ENCODE measurements at regions of chr6 and their contacts with region 1.

Region 1: DNA sequence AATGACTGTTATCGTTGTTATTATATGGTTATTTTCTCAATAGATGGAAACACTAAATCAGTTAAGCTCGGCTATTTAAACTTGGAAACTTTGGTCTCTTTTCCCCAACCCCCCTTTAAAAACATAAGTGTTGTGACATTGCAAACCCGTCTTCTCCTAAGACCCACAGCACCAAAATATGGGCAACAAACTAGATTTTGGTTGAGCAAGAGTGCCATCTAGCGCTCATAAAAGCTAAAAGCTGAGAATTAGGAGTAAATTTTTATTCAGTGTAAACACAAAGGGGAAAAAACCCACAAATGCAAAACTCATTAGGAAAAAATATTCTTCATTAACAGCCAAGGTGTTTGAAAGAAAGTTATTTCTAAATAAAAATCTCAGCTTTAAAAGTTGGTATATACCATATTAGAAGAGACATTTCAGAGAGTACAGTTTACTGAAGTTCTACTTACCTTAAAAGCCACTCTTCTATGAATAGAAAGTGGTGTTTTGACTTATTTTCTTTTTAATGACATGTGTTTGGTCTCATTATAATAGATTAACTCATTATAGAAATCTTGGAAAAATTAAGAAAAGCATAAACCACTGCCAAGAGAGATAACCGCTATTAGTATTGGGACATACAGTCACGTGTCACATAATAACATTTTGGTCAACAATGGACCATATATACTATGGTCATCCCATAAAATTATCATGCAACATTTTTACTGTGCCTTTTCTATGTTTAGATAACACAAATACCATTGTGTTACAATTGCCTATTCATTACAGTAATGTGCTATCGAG is 21.1 kb downstream of the SESN1 start:
- DNase-seq: peak; percentile 30 to 68
- H3K4me3 ChIP-seq: no peak overlapping the region
- H3K27ac ChIP-seq: no peak overlapping the region
- H3K4me1 ChIP-seq: no peaks in the 10 kb centered on the region; the same call in 1 of the 2 replicates
- H3K27me3 ChIP-seq: no peaks in the 10 kb centered on the region
- CTCF ChIP-seq: peak; percentile 87

Region 2: DNA sequence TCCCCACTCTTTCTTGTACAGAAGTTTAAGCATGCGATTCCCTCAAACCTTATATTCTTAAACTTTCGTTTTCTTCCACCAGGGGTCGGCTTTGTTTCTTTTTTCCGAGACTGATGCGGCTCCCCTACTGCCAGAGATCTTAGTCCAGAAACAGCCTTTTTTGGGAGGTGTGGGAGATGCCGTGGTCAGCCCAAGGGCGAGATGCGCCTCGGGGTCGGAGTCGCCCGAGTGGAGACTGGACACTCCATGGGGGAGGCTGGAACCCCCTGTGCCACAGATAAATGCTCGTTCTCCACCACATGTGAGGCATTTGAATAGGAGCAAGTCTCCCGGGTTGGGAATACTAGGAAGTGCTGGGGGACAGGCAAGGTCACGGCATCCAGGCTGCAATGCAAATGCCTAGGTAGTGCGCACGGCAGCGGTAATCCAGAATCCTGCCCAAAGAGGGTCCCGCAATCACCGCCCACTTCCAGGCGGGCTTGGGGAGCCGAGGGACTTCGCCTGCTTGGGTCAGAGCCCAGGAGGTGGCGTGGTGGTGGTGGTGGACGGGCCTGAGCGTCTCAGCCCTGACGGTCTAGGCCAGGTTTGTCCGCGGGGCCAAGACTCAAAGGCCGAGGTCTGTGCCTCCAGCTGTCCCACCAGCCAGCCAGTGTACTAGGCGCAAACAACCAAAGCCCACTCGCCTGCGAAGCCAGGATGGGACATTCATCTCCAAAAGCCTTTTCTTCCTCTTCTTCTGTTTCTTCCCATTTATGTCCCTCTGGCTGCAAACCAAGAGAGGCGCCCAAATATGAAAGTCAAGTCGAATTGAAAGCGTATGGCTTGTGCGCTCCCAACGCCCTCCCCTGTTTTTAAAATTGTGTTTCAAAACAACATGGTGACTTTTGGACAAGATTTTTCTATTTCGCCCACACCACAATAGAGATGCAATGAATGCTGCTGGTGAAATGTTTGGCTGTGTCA is 959.7 kb before region 1 on chr6:
- CTCF ChIA-PET with region 1: no interaction called
- POLR2A ChIA-PET with region 1: no interaction called
- intact Hi-C with region 1: loop called (anchors 10 kb)
- DNase-seq: peak; percentile 23 to 59
- H3K4me3 ChIP-seq: 0 out of 2 replicates have a peak overlapping the region, but pooled peaks have one; percentile 8
- H3K27ac ChIP-seq: no peak overlapping the region
- H3K4me1 ChIP-seq: no peaks in the 10 kb centered on the region
- H3K27me3 ChIP-seq: peaks cover 5% of the 10 kb centered on the region; the same call in 1 of the 2 replicates
- CTCF ChIP-seq: peak; percentile 87

Region 3: GRCh38 chr6:108782179-108783041 is 291.1 kb before region 1 on chr6:
- CTCF ChIA-PET with region 1: no interaction called
- POLR2A ChIA-PET with region 1: no interaction called
- intact Hi-C with region 1: loop called (anchors 2 kb)
- DNase-seq: peak; percentile 89 to 91
- H3K4me3 ChIP-seq: peak overlapping the region; percentile 43
- H3K27ac ChIP-seq: peak overlapping the region; percentile 77
- H3K4me1 ChIP-seq: peaks cover 45% of the 10 kb centered on the region
- H3K27me3 ChIP-seq: no peaks in the 10 kb centered on the region
- CTCF ChIP-seq: peak; percentile 91

Region 4: GRCh38 chr6:108896111-108896661 is 177.4 kb before region 1 on chr6:
- CTCF ChIA-PET with region 1: no interaction called
- POLR2A ChIA-PET with region 1: interaction called, 3 read pairs
- intact Hi-C with region 1: loop called (anchors 2 kb)
- DNase-seq: peak in 1 of 2 experiments; percentile 50
- H3K4me3 ChIP-seq: no peak overlapping the region
- H3K27ac ChIP-seq: peak overlapping the region; percentile 57
- H3K4me1 ChIP-seq: peaks cover 14% of the 10 kb centered on the region
- H3K27me3 ChIP-seq: no peaks in the 10 kb centered on the region
- CTCF ChIP-seq: no peak

Region 5: DNA sequence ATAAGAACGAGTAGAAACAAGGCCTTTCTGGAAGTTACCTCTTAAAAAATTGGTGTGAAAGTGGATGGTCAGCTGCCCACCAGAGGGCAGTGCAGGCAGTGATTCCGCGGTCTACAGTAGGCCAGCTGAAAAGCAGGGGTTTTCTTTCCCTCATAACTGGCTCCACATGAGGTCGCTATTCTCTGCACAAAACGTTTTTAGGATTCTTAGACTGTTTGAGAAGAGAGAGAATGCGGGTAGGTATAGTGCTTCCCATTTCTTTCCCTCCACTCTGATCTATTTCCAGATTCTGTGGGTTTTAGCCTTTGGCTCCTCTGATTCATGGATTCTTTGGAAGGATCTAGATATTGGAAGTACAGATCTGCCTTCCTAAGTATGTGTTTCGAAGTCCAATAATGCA is 631.7 kb after region 1 on chr6:
- CTCF ChIA-PET with region 1: interaction called, 12 read pairs
- POLR2A ChIA-PET with region 1: no interaction called
- intact Hi-C with region 1: no loop called
- DNase-seq: peak; percentile 76 to 77
- H3K4me3 ChIP-seq: no peak overlapping the region
- H3K27ac ChIP-seq: no peak overlapping the region
- H3K4me1 ChIP-seq: peaks cover 6% of the 10 kb centered on the region; the same call in 1 of the 2 replicates
- H3K27me3 ChIP-seq: no peaks in the 10 kb centered on the region
- CTCF ChIP-seq: peak; percentile 98

Measured in PC-9 (cell line).